Head of caudate nucleus (tissue), 42 donors: ENCODE measurements at regions of chr17 and their contacts with region 1.

Region 1: GRCh38 chr17:31524926-31525800 is 133.7 kb downstream of the RAB11FIP4 start:
- DNase-seq: peak; percentile 73 to 97 (median 91)

Region 2: GRCh38 chr17:31388770-31389661 is 136.1 kb before region 1 on chr17:
- intact Hi-C with region 1: loop called (anchors 5 kb)
- DNase-seq: peak in 37 of 42 donors; percentile 42 to 89 (median 69)

Region 3: DNA sequence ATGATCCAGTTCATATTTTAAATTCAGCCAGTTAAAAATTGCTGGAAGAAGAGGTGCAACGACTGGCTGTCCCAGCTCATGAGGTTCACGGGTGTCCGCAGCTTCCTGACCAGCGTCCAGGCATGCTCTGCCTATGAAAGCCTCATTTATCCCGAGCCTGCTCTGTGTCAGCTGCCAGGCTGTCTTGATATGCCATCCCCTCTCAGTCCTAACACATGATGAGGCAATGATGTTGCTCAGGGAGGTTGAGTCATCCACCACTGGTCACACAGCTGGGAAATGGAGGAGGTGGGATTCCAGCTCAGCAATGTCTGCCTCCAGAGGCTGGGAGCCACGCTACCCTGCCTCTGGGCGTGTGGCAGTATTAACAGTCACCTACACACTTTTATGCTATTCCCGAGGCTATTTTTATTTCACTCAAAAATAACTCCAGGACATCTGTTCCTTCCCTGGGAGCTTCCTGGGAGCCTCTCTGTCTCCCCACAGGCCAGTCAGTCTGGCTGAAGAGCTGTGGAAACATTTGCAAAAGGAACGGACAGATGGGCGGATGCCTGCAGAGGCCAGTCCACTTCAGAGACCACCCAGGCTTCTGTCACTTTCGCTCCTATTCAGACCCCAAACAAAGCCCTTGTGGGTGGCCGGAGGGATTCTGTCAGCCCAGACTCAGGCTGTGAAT is 111.2 kb before region 1 on chr17:
- intact Hi-C with region 1: no loop called
- DNase-seq: peak; percentile 63 to 94 (median 86)

Region 4: GRCh38 chr17:31437720-31438420 is 87.3 kb before region 1 on chr17:
- intact Hi-C with region 1: loop called (anchors 5 kb)
- DNase-seq: no peak